GM18951 (cell line): ENCODE measurements at regions of chr17 and their contacts with region 1.

Region 1: DNA sequence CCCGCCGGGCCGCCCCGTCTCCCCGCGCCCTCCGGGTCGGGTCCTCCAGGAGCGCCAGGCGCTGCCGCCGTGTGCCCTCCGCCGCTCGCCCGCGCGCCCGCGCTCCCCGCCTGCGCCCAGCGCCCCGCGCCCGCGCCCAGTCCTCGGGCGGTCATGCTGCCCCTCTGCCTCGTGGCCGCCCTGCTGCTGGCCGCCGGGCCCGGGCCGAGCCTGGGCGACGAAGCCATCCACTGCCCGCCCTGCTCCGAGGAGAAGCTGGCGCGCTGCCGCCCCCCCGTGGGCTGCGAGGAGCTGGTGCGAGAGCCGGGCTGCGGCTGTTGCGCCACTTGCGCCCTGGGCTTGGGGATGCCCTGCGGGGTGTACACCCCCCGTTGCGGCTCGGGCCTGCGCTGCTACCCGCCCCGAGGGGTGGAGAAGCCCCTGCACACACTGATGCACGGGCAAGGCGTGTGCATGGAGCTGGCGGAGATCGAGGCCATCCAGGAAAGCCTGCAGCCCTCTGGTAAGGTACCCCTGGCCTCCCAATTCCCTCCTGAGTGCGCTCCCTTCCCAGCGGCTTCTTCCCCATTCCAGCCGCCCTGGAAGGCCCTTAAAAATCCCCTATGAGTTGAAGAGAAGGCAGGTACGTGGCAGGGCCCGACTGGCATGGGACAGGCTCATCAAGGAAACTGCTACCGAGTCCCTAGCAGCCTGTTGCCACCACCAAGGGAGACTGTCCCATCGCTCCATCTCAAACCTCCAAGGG is 505 bp downstream of the IGFBP4 start:
- POLR2A ChIP-seq: no peak

Region 2: GRCh38 chr17:40542558-40543411 is 99.0 kb after region 1 on chr17:
- in situ Hi-C with region 1: loop called (anchors 25 kb)
- POLR2A ChIP-seq: no peak

Region 3: DNA sequence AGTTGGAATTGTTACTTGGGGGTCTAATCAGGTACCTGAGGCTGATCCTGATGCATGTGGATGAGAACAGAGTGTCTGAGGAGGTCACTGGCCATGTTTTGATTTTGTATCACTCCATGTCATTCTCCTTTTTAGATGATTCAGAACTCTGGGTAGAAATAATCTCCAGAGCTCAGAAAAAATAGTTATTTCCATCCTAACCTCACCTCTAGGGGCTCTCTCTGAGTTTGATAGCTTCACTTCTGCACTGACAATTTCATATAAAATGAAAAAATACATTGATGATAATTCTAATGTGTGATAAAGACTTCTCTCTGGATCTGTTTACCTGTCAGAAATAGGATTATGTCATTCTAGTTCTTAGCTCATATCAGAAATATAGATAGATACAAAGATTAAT is 429.5 kb after region 1 on chr17:
- in situ Hi-C with region 1: no loop called
- POLR2A ChIP-seq: no peak

Region 4: GRCh38 chr17:41153856-41154255 is 710.1 kb after region 1 on chr17:
- in situ Hi-C with region 1: no loop called
- POLR2A ChIP-seq: no peak